B cell (primary cell): ENCODE measurements at regions of chr1 and their contacts with region 1.

Region 1: GRCh38 chr1:114780344-114781226 is at the start of gene SIKE1:
- DNase-seq: peak; percentile 94
- ATAC-seq: peak; percentile 97
- H3K4me3 ChIP-seq: peak within 1 kb of the TSS; percentile 94 to 99 (median 96)
- H3K4me3 Mint-ChIP-seq: peak within 1 kb of the TSS; percentile 100
- H3K27ac ChIP-seq: peak within 1 kb of the TSS; percentile 75 to 84
- H3K27ac Mint-ChIP-seq: peak within 1 kb of the TSS; percentile 98
- H3K4me1 ChIP-seq: peaks cover 9 to 10% of the 10 kb centered on the region in 2 donors
- H3K4me1 Mint-ChIP-seq: peaks cover 26% of the 10 kb centered on the region
- H3K27me3 ChIP-seq: no peaks in the 10 kb centered on the region
- H3K27me3 Mint-ChIP-seq: peaks cover 9% of the 10 kb centered on the region
- CTCF ChIP-seq: no peak
- total RNA-seq, gene SIKE1: 44.8 and 47.8 TPM in 2 replicates

Region 2: GRCh38 chr1:114330451-114330983 is 450.1 kb before region 1 on chr1:
- CTCF ChIA-PET with region 1: no interaction called
- POLR2A ChIA-PET with region 1: no interaction called
- intact Hi-C with region 1: no loop called
- DNase-seq: no peak
- ATAC-seq: no peak
- H3K4me3 ChIP-seq: no peak overlapping the region
- H3K4me3 Mint-ChIP-seq: no peak overlapping the region
- H3K27ac ChIP-seq: no peak overlapping the region
- H3K27ac Mint-ChIP-seq: no peak overlapping the region
- H3K4me1 ChIP-seq: no peaks in the 10 kb centered on the region
- H3K4me1 Mint-ChIP-seq: no peaks in the 10 kb centered on the region
- H3K27me3 ChIP-seq: peaks cover 0 to 13% (median 8%) of the 10 kb centered on the region in 4 experiments
- H3K27me3 Mint-ChIP-seq: peaks cover 40% of the 10 kb centered on the region
- CTCF ChIP-seq: no peak

Region 3: GRCh38 chr1:114670083-114671010 is 110.2 kb before region 1 on chr1:
- CTCF ChIA-PET with region 1: no interaction called
- POLR2A ChIA-PET with region 1: no interaction called
- intact Hi-C with region 1: loop called (anchors 1 kb)
- DNase-seq: peak; percentile 91
- ATAC-seq: peak; percentile 99
- H3K4me3 ChIP-seq: peak overlapping the region; percentile 65 to 84 (median 72)
- H3K4me3 Mint-ChIP-seq: peak overlapping the region; percentile 99
- H3K27ac ChIP-seq: no peak overlapping the region
- H3K27ac Mint-ChIP-seq: peak overlapping the region; percentile 73
- H3K4me1 ChIP-seq: peaks cover 6 to 14% of the 10 kb centered on the region in 2 donors
- H3K4me1 Mint-ChIP-seq: peaks cover 14% of the 10 kb centered on the region
- H3K27me3 ChIP-seq: peaks cover 0 to 6% (median 0%) of the 10 kb centered on the region in 4 experiments
- H3K27me3 Mint-ChIP-seq: peaks cover 45% of the 10 kb centered on the region
- CTCF ChIP-seq: no peak